Esophagus squamous epithelium (tissue), 5 donors: ENCODE measurements at regions of chr5 and their contacts with region 1.

Region 1: GRCh38 chr5:159316519-159317383 is 13.5 kb downstream of the IL12B start:
- DNase-seq: no peak
- H3K4me3 ChIP-seq: no peak overlapping the region
- H3K27ac ChIP-seq: no peak overlapping the region
- H3K4me1 ChIP-seq: no peaks in the 10 kb centered on the region
- H3K27me3 ChIP-seq: peaks cover 0 to 15% (median 0%) of the 10 kb centered on the region in 4 donors
- CTCF ChIP-seq: peak in 5 of 6 experiments; percentile 50 to 71 (median 55)
- POLR2A ChIP-seq: no peak

Region 2: GRCh38 chr5:159156426-159157238 is 160.1 kb before region 1 on chr5:
- intact Hi-C with region 1: loop called (anchors 5 kb)
- DNase-seq: no peak
- H3K4me3 ChIP-seq: no peak overlapping the region
- H3K27ac ChIP-seq: peak overlapping the region in 1 of 4 donors; percentile 42
- H3K4me1 ChIP-seq: peaks cover 0 to 8% (median 3%) of the 10 kb centered on the region in 3 donors
- H3K27me3 ChIP-seq: no peaks in the 10 kb centered on the region
- CTCF ChIP-seq: peak; percentile 81 to 89 (median 84)
- POLR2A ChIP-seq: no peak